ENCODE measurements at regions of chr1 and their contacts with region 1.

Region 1: GRCh38 chr1:24805534-24806301 is 60.5 kb downstream of the CLIC4 start:
- DNase-seq: no peak
- ATAC-seq: no peak
- H3K4me3 Mint-ChIP-seq: no peak overlapping the region
- H3K27ac Mint-ChIP-seq: no peak overlapping the region
- H3K4me1 Mint-ChIP-seq: peaks cover 3% of the 10 kb centered on the region
- H3K27me3 Mint-ChIP-seq: no peaks in the 10 kb centered on the region

Region 2: DNA sequence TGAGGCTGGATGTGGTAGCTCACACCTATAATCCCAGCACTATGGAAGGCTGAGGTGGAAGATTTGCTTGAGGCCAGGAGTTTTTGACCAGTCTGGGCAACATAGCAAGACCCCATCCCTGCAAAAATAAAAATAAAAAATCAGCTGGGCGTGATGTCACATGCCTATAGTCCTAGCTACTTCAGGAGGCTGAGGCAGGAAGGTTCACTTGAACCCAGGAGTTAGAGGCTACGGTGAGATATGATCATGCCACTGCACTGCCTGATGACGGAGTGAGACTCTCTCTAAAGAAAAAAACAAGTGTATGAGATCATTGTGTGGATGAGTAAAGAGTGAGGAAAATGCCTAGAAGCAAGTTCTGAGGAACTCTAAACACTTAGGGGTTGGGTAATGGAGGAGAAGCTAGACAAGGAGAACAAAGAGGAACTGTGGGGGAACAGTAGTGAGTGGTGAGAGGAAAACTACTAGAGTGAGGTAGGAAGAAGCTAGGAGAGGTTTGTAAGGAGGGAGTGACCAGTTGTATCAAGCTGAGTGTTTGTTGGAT is 43.5 kb before region 1 on chr1:
- CTCF ChIA-PET with region 1: no interaction called
- POLR2A ChIA-PET with region 1: no interaction called
- intact Hi-C with region 1: loop called in 1 of 2 experiments (anchors 5 kb)
- DNase-seq: no peak
- ATAC-seq: no peak
- H3K4me3 Mint-ChIP-seq: no peak overlapping the region
- H3K27ac Mint-ChIP-seq: no peak overlapping the region
- H3K4me1 Mint-ChIP-seq: no peaks in the 10 kb centered on the region
- H3K27me3 Mint-ChIP-seq: no peaks in the 10 kb centered on the region

Region 3: GRCh38 chr1:25572708-25573600 is 767.2 kb after region 1 on chr1:
- CTCF ChIA-PET with region 1: no interaction called
- POLR2A ChIA-PET with region 1: no interaction called
- intact Hi-C with region 1: no loop called
- DNase-seq: peak; percentile 77
- ATAC-seq: peak; percentile 76
- H3K4me3 Mint-ChIP-seq: no peak overlapping the region
- H3K27ac Mint-ChIP-seq: no peak overlapping the region
- H3K4me1 Mint-ChIP-seq: peaks cover 38% of the 10 kb centered on the region
- H3K27me3 Mint-ChIP-seq: no peaks in the 10 kb centered on the region

Measured in activated CD4-positive, alpha-beta T cell treated with anti-CD3 and anti-CD28 coated beads for 36 hours (primary cell).